CD4-positive, alpha-beta memory T cell (primary cell): ENCODE measurements at regions of chr6 and their contacts with region 1.

Region 1: GRCh38 chr6:143098054-143098671 is 37.5 kb downstream of the AIG1 start:
- DNase-seq: peak; percentile 16 to 46 (median 33)
- H3K4me3 ChIP-seq: peak overlapping the region; percentile 8 to 19
- H3K4me3 Mint-ChIP-seq: no peak overlapping the region
- H3K27ac ChIP-seq: peak overlapping the region; percentile 19
- H3K27ac Mint-ChIP-seq: no peak overlapping the region
- H3K4me1 ChIP-seq: peaks cover 26% of the 10 kb centered on the region
- H3K4me1 Mint-ChIP-seq: peaks cover 0 to 4% (median 4%) of the 10 kb centered on the region in 4 donors
- H3K27me3 ChIP-seq: no peaks in the 10 kb centered on the region
- H3K27me3 Mint-ChIP-seq: no peaks in the 10 kb centered on the region

Region 2: DNA sequence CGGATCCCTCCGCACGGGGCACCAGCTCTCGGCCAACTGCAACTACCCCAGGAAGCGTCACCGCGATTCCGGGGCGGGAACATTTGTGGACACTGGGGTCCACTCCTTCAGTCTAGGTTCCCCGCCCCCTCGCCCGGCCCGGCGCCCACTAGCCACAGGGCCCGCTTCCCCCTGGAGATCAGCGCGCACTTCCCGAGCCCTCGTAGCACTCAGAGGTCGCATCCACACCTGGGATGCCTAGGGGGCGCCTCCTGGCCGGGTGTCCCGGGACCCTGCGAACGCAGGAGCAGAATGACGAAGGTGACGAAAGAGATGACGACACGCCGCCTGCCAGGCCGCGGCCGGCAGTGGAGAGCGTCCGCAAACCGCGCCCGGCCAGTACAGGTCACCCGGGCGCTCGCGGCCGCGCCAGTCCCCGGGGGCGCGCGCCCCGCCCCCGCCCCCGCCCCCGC is 37.8 kb before region 1 on chr6:
- CTCF ChIA-PET with region 1: no interaction called
- POLR2A ChIA-PET with region 1: interaction called, 22 read pairs
- intact Hi-C with region 1: no loop called
- DNase-seq: peak; percentile 76 to 88 (median 78)
- H3K4me3 ChIP-seq: peak overlapping the region; percentile 39 to 72
- H3K4me3 Mint-ChIP-seq: peak overlapping the region; percentile 92 to 97 (median 96)
- H3K27ac ChIP-seq: peak overlapping the region; percentile 70
- H3K27ac Mint-ChIP-seq: peak overlapping the region; percentile 92 to 99 (median 97)
- H3K4me1 ChIP-seq: peaks cover 17% of the 10 kb centered on the region
- H3K4me1 Mint-ChIP-seq: peaks cover 18 to 28% (median 23%) of the 10 kb centered on the region in 4 donors
- H3K27me3 ChIP-seq: no peaks in the 10 kb centered on the region
- H3K27me3 Mint-ChIP-seq: peaks cover 0 to 2% of the 10 kb centered on the region in 2 donors

Region 3: GRCh38 chr6:143397229-143398222 is 299.4 kb after region 1 on chr6:
- CTCF ChIA-PET with region 1: no interaction called
- POLR2A ChIA-PET with region 1: no interaction called
- intact Hi-C with region 1: no loop called
- DNase-seq: peak; percentile 32 to 70 (median 39)
- H3K4me3 ChIP-seq: no peak overlapping the region
- H3K4me3 Mint-ChIP-seq: peak overlapping the region in 6 of 8 donors; percentile 26 to 56 (median 45)
- H3K27ac ChIP-seq: no peak overlapping the region
- H3K27ac Mint-ChIP-seq: peak overlapping the region in 6 of 7 donors; percentile 11 to 83 (median 44)
- H3K4me1 ChIP-seq: peaks cover 26% of the 10 kb centered on the region
- H3K4me1 Mint-ChIP-seq: peaks cover 22 to 55% (median 40%) of the 10 kb centered on the region in 4 donors
- H3K27me3 ChIP-seq: no peaks in the 10 kb centered on the region
- H3K27me3 Mint-ChIP-seq: peaks cover 0 to 2% of the 10 kb centered on the region in 2 donors